ENCODE measurements at regions of chr17 and their contacts with region 1.

Region 1: DNA sequence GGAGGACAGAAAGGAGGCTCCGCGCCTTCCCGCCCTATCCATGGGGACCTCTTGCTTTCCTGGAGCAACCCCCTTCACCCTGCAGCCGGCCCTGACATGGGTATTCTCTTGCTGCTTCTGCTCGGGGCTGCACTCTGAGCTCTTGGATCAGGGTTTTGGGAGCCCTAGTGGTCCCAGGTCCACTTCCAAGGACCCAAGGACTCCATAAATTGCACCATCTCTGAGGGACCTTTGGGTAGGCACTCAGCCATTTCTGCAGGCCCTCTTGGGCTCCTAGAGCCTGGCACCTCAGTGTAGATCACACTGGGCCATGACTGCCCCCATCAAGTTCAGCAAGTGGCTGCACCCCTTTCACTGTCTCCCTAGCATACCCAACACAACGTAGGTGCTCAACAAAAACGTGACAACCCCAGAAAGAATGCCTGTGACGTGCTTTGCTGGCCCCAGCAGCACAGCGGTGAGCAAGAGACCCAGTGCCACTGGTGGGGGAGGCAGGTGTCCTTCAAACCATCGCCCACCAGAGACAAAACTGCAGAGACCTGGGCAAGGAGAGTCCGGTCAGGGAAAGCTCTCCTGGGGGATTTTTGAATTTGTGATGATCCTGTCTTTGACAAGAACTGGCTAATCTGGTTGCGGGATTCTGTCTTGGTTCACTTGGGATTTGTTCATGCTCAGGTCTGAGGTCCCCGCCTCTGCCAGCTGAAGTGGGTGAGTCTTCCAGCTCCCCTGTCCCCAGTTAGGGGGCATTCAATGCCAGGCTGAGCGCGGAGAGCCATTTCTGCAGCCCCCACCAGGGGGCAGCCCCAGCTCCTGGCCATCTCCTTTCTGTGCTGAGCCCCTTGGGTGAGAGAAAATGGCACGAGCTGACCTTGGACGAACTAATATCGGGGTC is 2.5 kb upstream of the RAB11FIP4 start:
- DNase-seq: no peak
- H3K4me3 ChIP-seq: no peak overlapping the region
- CTCF ChIP-seq: peak; percentile 77

Region 2: DNA sequence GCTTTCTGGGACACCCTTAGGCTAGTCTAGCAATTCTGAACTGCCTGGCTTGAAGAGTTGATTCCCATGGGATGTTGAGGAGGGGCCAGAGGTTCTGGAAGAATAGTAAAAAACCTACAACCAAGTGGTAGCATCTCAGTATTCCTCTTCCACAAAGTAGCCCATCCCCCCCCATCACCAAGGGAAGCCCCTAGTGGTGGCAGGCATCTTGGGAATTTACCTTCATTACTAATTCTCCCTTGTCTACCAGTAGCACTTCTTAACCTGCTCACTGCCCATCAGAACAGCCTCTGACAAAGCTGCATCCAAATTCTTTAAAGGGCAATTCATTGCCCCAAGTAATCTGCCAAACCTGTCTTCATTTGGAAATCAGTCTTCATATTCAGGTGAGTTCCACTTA is 10.4 kb before region 1 on chr17:
- CTCF ChIA-PET with region 1: interaction called, 27 read pairs
- POLR2A ChIA-PET with region 1: no interaction called
- DNase-seq: no peak
- H3K4me3 ChIP-seq: no peak overlapping the region
- CTCF ChIP-seq: no peak

Region 3: GRCh38 chr17:31888124-31888523 is 499.1 kb after region 1 on chr17:
- CTCF ChIA-PET with region 1: no interaction called
- POLR2A ChIA-PET with region 1: no interaction called
- DNase-seq: no peak
- H3K4me3 ChIP-seq: no peak overlapping the region
- CTCF ChIP-seq: no peak